ENCODE measurements at regions of chr12 and their contacts with region 1.

Region 1: GRCh38 chr12:116818948-116819832 is 62.1 kb downstream of the HRK start:
- DNase-seq: peak; percentile 92 to 96
- ATAC-seq: peak; percentile 86 to 91 (median 90)
- H3K4me3 ChIP-seq: peak overlapping the region; percentile 75
- H3K4me3 Mint-ChIP-seq: peak overlapping the region; percentile 95
- H3K27ac ChIP-seq: peak overlapping the region; percentile 82
- H3K27ac Mint-ChIP-seq: peak overlapping the region; percentile 80 to 94
- H3K4me1 ChIP-seq: peaks cover 15% of the 10 kb centered on the region
- H3K4me1 Mint-ChIP-seq: peaks cover 21 to 22% of the 10 kb centered on the region in 2 donors
- H3K27me3 ChIP-seq: no peaks in the 10 kb centered on the region
- H3K27me3 Mint-ChIP-seq: no peaks in the 10 kb centered on the region
- CTCF ChIP-seq: no peak

Region 2: GRCh38 chr12:116737774-116738700 is 81.2 kb before region 1 on chr12 and contains the starts of genes RNFT2 and SPRING1:
- intact Hi-C with region 1: loop called (anchors 1 kb)
- DNase-seq: peak; percentile 99
- ATAC-seq: peak; percentile 96 to 99 (median 97)
- H3K4me3 ChIP-seq: peak within 1 kb of the TSS; percentile 62
- H3K4me3 Mint-ChIP-seq: peak within 1 kb of the TSS; percentile 96
- H3K27ac ChIP-seq: no peak within 1 kb of the TSS
- H3K27ac Mint-ChIP-seq: peak within 1 kb of the TSS; percentile 84 to 90
- H3K4me1 ChIP-seq: peaks cover 15% of the 10 kb centered on the region
- H3K4me1 Mint-ChIP-seq: peaks cover 30 to 31% of the 10 kb centered on the region in 2 donors
- H3K27me3 ChIP-seq: no peaks in the 10 kb centered on the region
- H3K27me3 Mint-ChIP-seq: no peaks in the 10 kb centered on the region
- CTCF ChIP-seq: no peak
- total RNA-seq, gene RNFT2: 4.0 to 6.9 (median 5.3) TPM
- total RNA-seq, gene SPRING1: 24.4 to 37.2 (median 30.4) TPM

Measured in natural killer cell (primary cell).